RWPE1 (cell line): ENCODE measurements at regions of chr18 and their contacts with region 1.

Region 1: GRCh38 chr18:74342416-74343043 is 26.9 kb downstream of the C18orf63 start:
- DNase-seq: peak; percentile 6
- H3K27ac ChIP-seq: no peak overlapping the region
- CTCF ChIP-seq: peak; percentile 79

Region 2: GRCh38 chr18:73688847-73689711 is 653.5 kb before region 1 on chr18:
- CTCF ChIA-PET with region 1: no interaction called
- POLR2A ChIA-PET with region 1: no interaction called
- DNase-seq: peak; percentile 41
- H3K27ac ChIP-seq: peak overlapping the region; percentile 40; the same call in 1 of the 2 replicates
- CTCF ChIP-seq: no peak

Region 3: GRCh38 chr18:74196220-74197119 is 146.1 kb before region 1 on chr18:
- CTCF ChIA-PET with region 1: interaction called, 17 read pairs
- POLR2A ChIA-PET with region 1: no interaction called
- DNase-seq: peak; percentile 79
- H3K27ac ChIP-seq: no peak overlapping the region
- CTCF ChIP-seq: peak; percentile 91

Region 4: GRCh38 chr18:74353169-74353775 is 10.7 kb after region 1 on chr18:
- CTCF ChIA-PET with region 1: interaction called, 12 read pairs
- POLR2A ChIA-PET with region 1: no interaction called
- DNase-seq: peak; percentile 36
- H3K27ac ChIP-seq: no peak overlapping the region
- CTCF ChIP-seq: peak; percentile 68